ENCODE measurements at regions of chr6 and their contacts with region 1.

Region 1: GRCh38 chr6:32853541-32854375 is at the starts of genes PSMB9 and TAP1:
- DNase-seq: peak; percentile 92
- H3K4me3 Mint-ChIP-seq: peak within 1 kb of the TSS; percentile 98
- H3K27ac Mint-ChIP-seq: peak within 1 kb of the TSS; percentile 99
- H3K4me1 Mint-ChIP-seq: peaks cover 71% of the 10 kb centered on the region
- H3K27me3 Mint-ChIP-seq: no peaks in the 10 kb centered on the region
- total RNA-seq, gene PSMB9: 249 and 253 TPM in 2 replicates
- total RNA-seq, gene TAP1: 284 and 290 TPM in 2 replicates

Region 2: DNA sequence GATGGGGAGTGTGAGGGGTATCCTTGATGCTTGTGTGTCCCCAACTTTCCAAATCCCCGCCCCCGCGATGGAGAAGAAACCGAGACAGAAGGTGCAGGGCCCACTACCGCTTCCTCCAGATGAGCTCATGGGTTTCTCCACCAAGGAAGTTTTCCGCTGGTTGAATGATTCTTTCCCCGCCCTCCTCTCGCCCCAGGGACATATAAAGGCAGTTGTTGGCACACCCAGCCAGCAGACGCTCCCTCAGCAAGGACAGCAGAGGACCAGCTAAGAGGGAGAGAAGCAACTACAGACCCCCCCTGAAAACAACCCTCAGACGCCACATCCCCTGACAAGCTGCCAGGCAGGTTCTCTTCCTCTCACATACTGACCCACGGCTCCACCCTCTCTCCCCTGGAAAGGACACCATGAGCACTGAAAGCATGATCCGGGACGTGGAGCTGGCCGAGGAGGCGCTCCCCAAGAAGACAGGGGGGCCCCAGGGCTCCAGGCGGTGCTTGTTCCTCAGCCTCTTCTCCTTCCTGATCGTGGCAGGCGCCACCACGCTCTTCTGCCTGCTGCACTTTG is 1278.3 kb before region 1 on chr6 and contains the start of gene TNF:
- intact Hi-C with region 1: loop called (anchors 5 kb)
- DNase-seq: peak; percentile 85
- H3K4me3 Mint-ChIP-seq: peak within 1 kb of the TSS; percentile 92
- H3K27ac Mint-ChIP-seq: peak within 1 kb of the TSS; percentile 81
- H3K4me1 Mint-ChIP-seq: peaks cover 81% of the 10 kb centered on the region
- H3K27me3 Mint-ChIP-seq: peaks cover 2% of the 10 kb centered on the region
- total RNA-seq, gene TNF: 427 and 430 TPM in 2 replicates

Region 3: GRCh38 chr6:32127717-32128592 is 725.8 kb before region 1 on chr6 and contains the start of gene ATF6B:
- intact Hi-C with region 1: loop called (anchors 1 kb)
- DNase-seq: peak; percentile 95
- H3K4me3 Mint-ChIP-seq: peak within 1 kb of the TSS; percentile 99
- H3K27ac Mint-ChIP-seq: peak within 1 kb of the TSS; percentile 94
- H3K4me1 Mint-ChIP-seq: peaks cover 45% of the 10 kb centered on the region
- H3K27me3 Mint-ChIP-seq: peaks cover 2% of the 10 kb centered on the region
- total RNA-seq, gene ATF6B: 80.1 and 97.6 TPM in 2 replicates

Region 4: GRCh38 chr6:32666420-32667300 is 187.1 kb before region 1 on chr6 and contains the start of gene HLA-DQB1:
- intact Hi-C with region 1: loop called (anchors 5 kb)
- DNase-seq: peak; percentile 57
- H3K4me3 Mint-ChIP-seq: peak within 1 kb of the TSS; percentile 87
- H3K27ac Mint-ChIP-seq: peak within 1 kb of the TSS; percentile 72
- H3K4me1 Mint-ChIP-seq: peaks cover 45% of the 10 kb centered on the region
- H3K27me3 Mint-ChIP-seq: peaks cover 32% of the 10 kb centered on the region
- total RNA-seq, gene HLA-DQB1: 4.3 and 4.7 TPM in 2 replicates

Region 5: GRCh38 chr6:32832535-32832934 is 21.2 kb before region 1 on chr6:
- intact Hi-C with region 1: no loop called
- DNase-seq: no peak
- H3K4me3 Mint-ChIP-seq: no peak overlapping the region
- H3K27ac Mint-ChIP-seq: no peak overlapping the region
- H3K4me1 Mint-ChIP-seq: peaks cover 88% of the 10 kb centered on the region
- H3K27me3 Mint-ChIP-seq: no peaks in the 10 kb centered on the region

Region 6: DNA sequence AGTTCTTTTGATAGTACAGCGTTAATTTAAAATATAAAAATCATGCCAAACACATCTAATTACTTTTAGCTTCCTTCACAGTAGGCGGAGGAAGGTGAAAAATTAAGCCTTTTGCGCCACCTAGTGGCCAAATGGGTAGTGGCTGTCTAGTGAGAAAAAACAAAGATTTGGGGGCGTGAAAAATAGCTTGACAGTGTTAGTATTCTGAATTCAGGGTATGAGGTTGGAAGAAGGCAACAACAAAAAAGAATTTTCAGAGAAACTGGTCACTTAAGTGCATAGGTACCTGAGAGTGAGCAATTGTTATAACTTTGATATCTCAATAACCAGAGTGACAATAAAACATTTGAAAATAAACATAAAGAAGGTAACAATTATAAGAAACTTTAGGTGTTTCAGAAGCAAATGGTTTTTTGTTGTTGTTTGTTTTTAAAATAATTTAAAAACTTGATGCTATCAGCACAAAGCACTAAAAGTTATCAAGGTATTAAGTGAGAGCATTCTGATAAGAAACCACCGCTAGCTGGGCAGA is 14.6 kb after region 1 on chr6:
- intact Hi-C with region 1: loop called (anchors 1 kb)
- DNase-seq: peak; percentile 75
- H3K4me3 Mint-ChIP-seq: no peak overlapping the region
- H3K27ac Mint-ChIP-seq: no peak overlapping the region
- H3K4me1 Mint-ChIP-seq: peaks cover 36% of the 10 kb centered on the region
- H3K27me3 Mint-ChIP-seq: peaks cover 1% of the 10 kb centered on the region

Region 7: GRCh38 chr6:33091957-33092356 is 238.2 kb after region 1 on chr6:
- intact Hi-C with region 1: no loop called
- DNase-seq: peak; percentile 35
- H3K4me3 Mint-ChIP-seq: no peak overlapping the region
- H3K27ac Mint-ChIP-seq: no peak overlapping the region
- H3K4me1 Mint-ChIP-seq: no peaks in the 10 kb centered on the region
- H3K27me3 Mint-ChIP-seq: peaks cover 16% of the 10 kb centered on the region

Region 8: DNA sequence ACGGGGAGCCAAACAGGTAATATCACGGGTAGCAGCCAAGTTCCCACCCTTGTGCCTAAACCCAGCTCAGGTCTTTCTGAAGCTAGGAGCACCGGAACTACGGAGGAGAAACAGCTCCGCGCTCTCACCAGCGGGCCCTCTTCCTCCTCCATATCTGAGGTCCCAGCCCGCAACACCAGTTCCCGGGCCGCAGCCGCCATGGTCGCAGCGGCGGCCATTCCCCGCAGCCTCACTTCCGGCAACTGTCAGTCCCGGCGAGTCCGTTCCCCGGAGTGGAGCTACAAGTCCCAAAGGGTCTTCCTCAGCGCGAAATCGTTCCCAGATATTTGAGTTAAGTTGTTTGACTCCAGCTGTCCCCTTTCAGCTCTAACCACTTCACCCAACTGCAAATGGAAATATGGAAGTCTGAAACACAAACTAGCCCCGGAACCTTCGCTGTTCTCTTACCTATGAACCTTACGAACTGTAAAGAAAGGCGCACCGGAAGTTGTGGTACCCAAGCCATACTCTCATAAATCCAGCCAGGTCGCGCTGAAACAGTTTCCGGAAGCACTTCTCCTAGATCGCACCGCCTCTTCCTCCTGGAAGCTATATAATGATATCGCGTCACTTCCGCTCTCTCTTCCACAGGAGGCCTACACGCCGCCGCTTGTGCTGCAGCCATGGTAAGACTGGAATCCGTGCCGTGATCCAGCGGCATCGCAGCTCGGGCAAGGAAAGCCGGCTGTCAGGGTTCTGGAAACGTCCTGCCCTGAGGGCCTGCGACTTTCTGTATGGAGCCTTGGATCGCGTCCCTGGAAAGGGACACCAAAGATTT is 417.9 kb after region 1 on chr6 and contains the starts of genes RPS18 and VPS52:
- intact Hi-C with region 1: loop called (anchors 5 kb)
- DNase-seq: peak; percentile 89
- H3K4me3 Mint-ChIP-seq: peak within 1 kb of the TSS; percentile 97
- H3K27ac Mint-ChIP-seq: peak within 1 kb of the TSS; percentile 99
- H3K4me1 Mint-ChIP-seq: peaks cover 55% of the 10 kb centered on the region
- H3K27me3 Mint-ChIP-seq: no peaks in the 10 kb centered on the region
- total RNA-seq, gene RPS18: 2,930 and 2,946 TPM in 2 replicates
- total RNA-seq, gene VPS52: 59.8 and 63.5 TPM in 2 replicates

Measured in activated T-helper 1 cell treated with anti-CD3 and anti-CD28 coated beads, Interleukin-12 subunit alpha, Interleukin-12 subunit beta, Interleukin-2, Interleukin-4 antibody, amounts not matched to agents 30 ng/mL and 10 ng/mL and 1 ng/mL, durations not matched to agents 14 hours and 24 hours and 36 hours (primary cell).